CD4-positive, alpha-beta T cell (primary cell): ENCODE measurements at regions of chr1 and their contacts with region 1.

Region 1: DNA sequence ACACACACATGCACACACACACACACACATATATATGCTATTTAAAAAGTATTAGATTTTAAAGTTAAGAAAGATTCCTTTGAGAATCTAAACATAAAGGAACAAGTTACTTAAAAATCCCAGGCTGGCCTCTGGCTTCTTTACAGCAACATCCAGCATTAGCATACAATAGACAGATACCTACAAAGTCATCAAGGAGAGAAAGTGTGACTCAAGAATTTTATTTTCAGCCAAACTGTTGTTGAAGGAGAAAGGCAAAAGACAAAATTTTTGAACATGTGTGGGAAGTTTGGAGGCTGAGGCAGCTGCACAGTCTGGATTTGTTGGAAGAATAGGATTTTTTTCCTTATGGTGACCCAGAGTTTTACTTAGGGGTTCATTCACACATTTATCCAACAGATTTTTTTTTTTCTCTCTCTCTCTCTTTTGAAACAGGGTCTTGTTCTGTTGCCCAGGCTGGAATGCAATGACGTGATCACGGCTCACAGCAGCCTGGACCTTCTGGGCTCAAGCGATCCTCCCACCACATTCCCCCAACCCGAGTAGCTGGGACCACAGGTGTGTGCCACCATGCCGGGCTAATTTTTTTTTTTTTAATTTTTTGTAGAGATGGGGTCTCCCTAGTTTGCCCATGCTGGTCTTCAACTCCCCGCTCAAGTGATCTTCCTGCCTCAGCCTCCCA is 24.0 kb upstream of the SPOCD1 start:
- DNase-seq: no peak
- ATAC-seq: no peak
- H3K4me3 ChIP-seq: no peak overlapping the region
- H3K4me3 Mint-ChIP-seq: no peak overlapping the region
- H3K27ac ChIP-seq: no peak overlapping the region
- H3K27ac Mint-ChIP-seq: no peak overlapping the region
- H3K4me1 ChIP-seq: peaks cover 9% of the 10 kb centered on the region
- H3K4me1 Mint-ChIP-seq: peaks cover 25% of the 10 kb centered on the region
- H3K27me3 ChIP-seq: no peaks in the 10 kb centered on the region
- H3K27me3 Mint-ChIP-seq: no peaks in the 10 kb centered on the region
- CTCF ChIP-seq: no peak

Region 2: DNA sequence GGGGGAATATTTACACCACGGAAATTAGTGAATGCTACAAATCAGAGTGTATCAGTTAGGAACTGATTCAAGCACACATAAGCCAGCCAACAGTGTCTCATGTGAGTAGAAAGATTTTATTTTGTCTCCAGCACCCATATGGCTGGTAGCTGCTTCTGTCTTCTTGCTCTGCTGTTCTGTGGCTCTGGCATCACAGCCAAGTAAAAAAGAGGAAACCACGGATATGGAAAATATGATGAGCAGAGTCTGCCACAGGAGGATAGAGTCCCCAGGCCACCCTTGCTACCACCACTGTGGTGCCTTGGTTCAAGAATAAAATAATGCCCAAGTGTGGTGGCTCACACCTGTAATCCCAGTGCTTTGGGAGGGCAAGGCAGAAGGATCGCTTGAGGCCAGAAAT is 29.6 kb after region 1 on chr1:
- CTCF ChIA-PET with region 1: no interaction called
- POLR2A ChIA-PET with region 1: no interaction called
- intact Hi-C with region 1: no loop called
- DNase-seq: no peak
- ATAC-seq: no peak
- H3K4me3 ChIP-seq: no peak overlapping the region
- H3K4me3 Mint-ChIP-seq: no peak overlapping the region
- H3K27ac ChIP-seq: no peak overlapping the region
- H3K27ac Mint-ChIP-seq: no peak overlapping the region
- H3K4me1 ChIP-seq: peaks cover 19% of the 10 kb centered on the region
- H3K4me1 Mint-ChIP-seq: peaks cover 25% of the 10 kb centered on the region
- H3K27me3 ChIP-seq: no peaks in the 10 kb centered on the region
- H3K27me3 Mint-ChIP-seq: no peaks in the 10 kb centered on the region
- CTCF ChIP-seq: no peak

Region 3: GRCh38 chr1:31880890-31881687 is 41.3 kb after region 1 on chr1:
- CTCF ChIA-PET with region 1: no interaction called
- POLR2A ChIA-PET with region 1: no interaction called
- intact Hi-C with region 1: loop called (anchors 5 kb)
- DNase-seq: no peak
- ATAC-seq: no peak
- H3K4me3 ChIP-seq: no peak overlapping the region
- H3K4me3 Mint-ChIP-seq: no peak overlapping the region
- H3K27ac ChIP-seq: no peak overlapping the region
- H3K27ac Mint-ChIP-seq: no peak overlapping the region
- H3K4me1 ChIP-seq: peaks cover 4% of the 10 kb centered on the region
- H3K4me1 Mint-ChIP-seq: peaks cover 11% of the 10 kb centered on the region
- H3K27me3 ChIP-seq: no peaks in the 10 kb centered on the region
- H3K27me3 Mint-ChIP-seq: no peaks in the 10 kb centered on the region
- CTCF ChIP-seq: no peak